GM18951 (cell line): ENCODE measurements at regions of chr1 and their contacts with region 1.

Region 1: DNA sequence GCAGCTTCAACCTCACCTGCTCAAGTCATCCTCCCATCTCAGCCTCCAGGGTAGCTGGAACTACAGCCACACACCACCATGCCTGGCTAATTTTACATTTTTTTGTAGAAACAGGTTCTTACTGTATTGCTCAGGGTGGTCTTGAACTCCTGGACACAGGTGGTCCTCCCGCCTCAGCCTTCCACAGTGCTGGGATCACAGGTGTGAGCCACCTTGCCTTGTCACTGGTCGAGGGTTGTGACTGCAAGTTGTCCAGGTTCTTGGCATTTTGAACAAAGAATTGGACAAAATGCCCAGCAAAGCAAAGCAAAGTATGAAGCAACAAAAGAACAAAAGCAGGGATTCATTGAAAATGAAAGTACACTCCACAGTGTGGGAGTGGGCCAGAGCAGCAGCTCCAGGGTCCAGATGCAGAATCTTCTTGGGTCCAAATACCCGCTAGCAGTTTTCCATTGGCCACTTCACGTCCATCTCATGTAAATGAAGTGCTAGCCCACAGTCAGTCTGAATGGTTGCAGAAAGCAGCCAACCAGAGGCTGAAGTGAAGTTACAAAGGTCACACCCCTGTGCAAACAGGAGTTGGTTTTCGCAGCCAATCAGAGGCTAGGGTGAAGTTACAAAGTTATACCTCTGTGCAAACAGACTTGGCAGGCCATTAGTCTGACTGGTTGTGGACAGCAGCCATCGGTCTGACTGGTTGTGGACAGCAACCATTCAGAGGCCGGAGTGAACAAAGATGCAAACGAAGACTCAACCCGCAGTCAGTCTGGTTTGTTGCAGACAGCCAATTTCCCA is 109.5 kb upstream of the KIF26B start:
- POLR2A ChIP-seq: no peak

Region 2: DNA sequence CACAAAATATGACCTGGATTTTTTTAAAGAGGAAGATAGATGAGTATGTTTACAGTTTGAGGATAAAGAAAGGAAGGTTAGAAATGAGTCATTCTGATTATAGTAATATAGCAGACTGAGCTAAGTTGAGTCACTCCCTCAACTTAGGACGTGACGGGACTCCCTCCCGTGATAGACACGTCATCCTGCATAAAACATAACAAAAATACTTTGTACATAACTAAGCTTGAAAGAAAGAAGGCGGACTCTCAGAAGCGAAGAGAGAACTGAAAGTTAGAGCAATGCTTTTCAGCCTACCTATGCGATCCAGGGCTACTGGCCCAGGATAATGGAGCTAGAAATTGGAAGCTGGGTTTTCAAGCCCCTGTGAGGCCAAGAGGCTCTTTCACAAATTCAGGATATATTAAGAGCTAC is 445.3 kb before region 1 on chr1:
- in situ Hi-C with region 1: loop called (anchors 10 kb)
- POLR2A ChIP-seq: no peak

Region 3: DNA sequence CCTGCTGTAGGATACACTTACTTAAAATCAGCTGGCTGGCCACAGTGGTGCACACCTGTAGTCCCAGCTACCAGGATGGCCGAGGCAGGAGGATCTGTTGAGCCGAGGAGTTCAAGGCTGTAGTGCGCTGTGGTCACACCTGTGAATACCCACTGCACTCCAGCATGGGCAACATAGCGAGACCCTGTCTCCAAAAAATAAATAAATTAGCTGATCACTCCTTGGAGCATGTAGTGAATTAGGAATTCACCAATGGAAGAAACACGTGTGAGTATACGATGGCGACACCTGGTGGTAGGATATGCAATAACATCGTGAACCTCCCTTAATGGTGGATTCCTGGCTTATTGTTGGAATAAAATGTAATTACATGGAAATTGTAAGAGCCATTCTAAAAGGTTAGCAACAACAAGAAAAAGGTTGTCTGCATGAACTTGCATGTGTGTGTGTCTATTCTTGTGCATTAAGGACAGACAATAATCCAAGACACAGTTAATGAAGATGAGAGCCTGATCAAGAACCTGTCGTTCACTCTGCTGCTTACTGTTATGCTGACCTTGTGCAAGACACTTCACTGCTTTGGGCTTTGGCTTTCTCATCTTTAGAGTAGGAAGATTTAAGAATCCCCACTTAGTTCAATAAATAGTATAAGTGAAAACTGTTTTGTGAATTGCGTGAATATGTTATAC is 248.4 kb before region 1 on chr1:
- in situ Hi-C with region 1: loop called (anchors 10 kb)
- POLR2A ChIP-seq: no peak

Region 4: GRCh38 chr1:244864253-244865027 is 180.8 kb before region 1 on chr1 and contains the start of gene HNRNPU:
- in situ Hi-C with region 1: loop called (anchors 25 kb)
- POLR2A ChIP-seq: peak; percentile 96

Region 5: DNA sequence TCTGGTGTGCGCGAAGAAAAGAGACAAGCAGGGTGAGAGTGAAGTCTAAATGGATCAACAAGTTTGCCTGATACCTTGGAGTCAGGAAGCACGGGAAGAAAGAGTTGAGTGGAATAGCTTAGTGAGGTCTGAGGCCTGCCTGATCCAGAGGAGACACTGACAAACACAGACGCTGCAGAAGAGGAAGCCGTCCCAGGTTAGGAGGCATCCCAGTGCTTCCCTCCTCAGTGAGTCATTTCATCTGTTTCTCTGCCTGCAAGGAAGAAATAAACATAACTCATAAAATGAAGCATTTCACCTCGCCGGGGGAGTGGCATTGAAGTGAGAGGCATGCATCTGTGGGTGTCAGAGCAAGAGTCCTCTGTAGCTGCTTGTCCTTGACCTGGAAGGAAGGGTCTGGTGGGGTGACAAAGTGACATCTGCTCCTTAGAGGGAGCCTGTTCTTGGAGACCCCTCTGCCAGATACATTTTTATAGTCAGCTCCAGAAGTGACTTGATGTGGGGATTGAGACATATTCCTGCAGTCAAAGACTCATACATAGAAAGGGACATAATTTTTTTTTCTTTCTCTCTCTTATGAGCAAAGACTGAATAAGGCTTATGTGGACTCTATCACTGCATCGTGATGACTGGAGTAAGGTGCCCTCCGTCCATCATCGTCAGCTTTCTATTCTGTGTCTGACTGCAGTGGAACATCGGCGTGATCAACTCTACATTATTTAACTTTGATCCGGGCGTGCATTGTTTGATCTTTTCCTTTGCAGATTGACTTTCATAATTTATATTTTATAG is 366.2 kb after region 1 on chr1:
- in situ Hi-C with region 1: no loop called
- POLR2A ChIP-seq: no peak